Activated CD4-positive, alpha-beta memory T cell treated with anti-CD3 and anti-CD28 coated beads for 36 hours (primary cell): ENCODE measurements at regions of chr2 and their contacts with region 1.

Region 1: GRCh38 chr2:66577321-66578053 is 142.6 kb downstream of the MEIS1 start:
- DNase-seq: no peak
- H3K4me3 Mint-ChIP-seq: no peak overlapping the region
- H3K27ac Mint-ChIP-seq: no peak overlapping the region
- H3K4me1 Mint-ChIP-seq: peaks cover 3% of the 10 kb centered on the region
- H3K27me3 Mint-ChIP-seq: peaks cover 54% of the 10 kb centered on the region

Region 2: GRCh38 chr2:66434679-66435548 is 142.6 kb before region 1 on chr2 and contains the start of gene MEIS1:
- CTCF ChIA-PET with region 1: no interaction called
- POLR2A ChIA-PET with region 1: no interaction called
- intact Hi-C with region 1: loop called (anchors 2 kb)
- DNase-seq: peak; percentile 47
- H3K4me3 Mint-ChIP-seq: peak within 1 kb of the TSS; percentile 62
- H3K27ac Mint-ChIP-seq: no peak within 1 kb of the TSS
- H3K4me1 Mint-ChIP-seq: peaks cover 30% of the 10 kb centered on the region
- H3K27me3 Mint-ChIP-seq: peaks cover 78% of the 10 kb centered on the region
- total RNA-seq, gene MEIS1: not detected